Ascending aorta (tissue), 2 donors: ENCODE measurements at regions of chr7 and their contacts with region 1.

Region 1: DNA sequence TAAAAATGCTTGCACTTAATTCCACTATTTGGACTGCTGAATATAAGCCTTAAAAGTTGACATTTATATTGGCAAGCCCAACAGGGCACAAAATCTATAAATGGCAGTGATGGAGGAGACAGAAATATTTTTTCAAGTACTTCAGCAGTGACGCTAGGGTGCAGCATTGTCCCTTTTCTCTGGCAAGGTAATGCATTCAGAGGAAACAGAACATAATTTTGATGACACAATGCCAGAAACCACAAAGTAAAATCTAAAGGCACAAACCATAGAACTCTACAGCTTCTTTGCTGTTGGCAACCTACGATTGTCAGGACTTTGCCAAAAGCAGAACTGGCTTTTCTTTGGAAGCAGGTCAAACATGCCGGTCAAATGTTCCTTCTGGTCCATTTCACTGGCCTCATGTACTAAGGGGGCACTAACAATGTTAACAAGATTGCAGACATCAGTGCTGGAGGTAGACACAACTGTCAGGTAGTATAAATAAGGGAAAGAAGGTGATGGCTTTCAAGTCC is 30.9 kb upstream of the FAM133B start:
- DNase-seq: peak in 1 of 2 donors; percentile 73
- H3K4me3 ChIP-seq: no peak overlapping the region
- H3K27ac ChIP-seq: peak overlapping the region; percentile 68 to 76
- H3K4me1 ChIP-seq: peaks cover 0 to 9% of the 10 kb centered on the region in 2 donors
- H3K27me3 ChIP-seq: no peaks in the 10 kb centered on the region
- CTCF ChIP-seq: peak; percentile 78 to 83 (median 80)

Region 2: GRCh38 chr7:92691578-92691977 is 70.5 kb after region 1 on chr7:
- intact Hi-C with region 1: loop called (anchors 5 kb)
- DNase-seq: no peak
- H3K4me3 ChIP-seq: no peak overlapping the region
- H3K27ac ChIP-seq: no peak overlapping the region
- H3K4me1 ChIP-seq: peaks cover 0 to under 1% of the 10 kb centered on the region in 2 donors
- H3K27me3 ChIP-seq: no peaks in the 10 kb centered on the region
- CTCF ChIP-seq: peak; percentile 21 to 49 (median 35)